MCF 10A (cell line): ENCODE measurements at regions of chr13 and their contacts with region 1.

Region 1: GRCh38 chr13:38686577-38687245 is at the start of gene FREM2:
- DNase-seq: peak; percentile 73
- H3K4me3 Mint-ChIP-seq: peak within 1 kb of the TSS; percentile 71
- H3K27ac Mint-ChIP-seq: no peak within 1 kb of the TSS
- H3K4me1 Mint-ChIP-seq: peaks cover 7% of the 10 kb centered on the region
- H3K27me3 Mint-ChIP-seq: no peaks in the 10 kb centered on the region
- CTCF ChIP-seq: no peak
- total RNA-seq, gene FREM2: not detected in 2 replicates

Region 2: GRCh38 chr13:38777347-38778119 is 90.8 kb after region 1 on chr13:
- CTCF ChIA-PET with region 1: interaction called, 12 read pairs
- POLR2A ChIA-PET with region 1: no interaction called
- intact Hi-C with region 1: no loop called
- DNase-seq: no peak
- H3K4me3 Mint-ChIP-seq: no peak overlapping the region
- H3K27ac Mint-ChIP-seq: no peak overlapping the region
- H3K4me1 Mint-ChIP-seq: no peaks in the 10 kb centered on the region
- H3K27me3 Mint-ChIP-seq: peaks cover 23% of the 10 kb centered on the region
- CTCF ChIP-seq: no peak

Region 3: GRCh38 chr13:38866649-38867048 is 179.9 kb after region 1 on chr13:
- CTCF ChIA-PET with region 1: interaction called, 18 read pairs
- POLR2A ChIA-PET with region 1: no interaction called
- intact Hi-C with region 1: loop called (anchors 5 kb)
- DNase-seq: peak; percentile 13
- H3K4me3 Mint-ChIP-seq: no peak overlapping the region
- H3K27ac Mint-ChIP-seq: no peak overlapping the region
- H3K4me1 Mint-ChIP-seq: no peaks in the 10 kb centered on the region
- H3K27me3 Mint-ChIP-seq: peaks cover 40% of the 10 kb centered on the region
- CTCF ChIP-seq: peak; percentile 11